OCI-LY7 (cell line): ENCODE measurements at regions of chr12 and their contacts with region 1.

Region 1: DNA sequence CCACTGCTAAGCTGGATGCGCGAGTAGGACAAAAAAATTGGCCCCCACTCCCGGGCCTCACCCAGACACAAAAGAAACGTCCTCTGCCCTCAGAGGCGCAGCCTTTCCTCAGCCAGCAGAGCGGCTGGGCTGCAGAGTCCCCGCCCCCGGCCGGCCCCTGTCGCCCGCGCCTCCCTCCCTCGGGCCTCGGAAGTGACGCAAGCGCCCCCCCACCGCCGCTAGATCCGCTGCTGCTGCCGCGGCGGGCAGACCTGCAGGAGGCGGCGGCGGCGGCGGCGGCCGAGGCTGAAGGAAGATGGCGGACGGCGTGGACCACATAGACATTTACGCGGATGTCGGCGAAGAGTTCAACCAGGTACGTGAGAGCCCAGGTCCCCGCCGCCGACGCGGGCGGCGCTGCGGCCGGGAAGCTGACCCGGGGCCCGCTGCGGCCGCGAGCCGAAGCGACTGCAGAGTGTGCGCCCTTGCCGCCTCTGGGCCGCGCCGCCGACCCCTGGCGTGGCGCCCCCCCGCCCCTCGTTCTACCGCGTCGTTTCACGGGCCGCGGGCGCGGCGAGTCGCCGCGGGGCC is at the start of gene CPSF6:
- DNase-seq: peak; percentile 96
- H3K4me3 ChIP-seq: peak within 1 kb of the TSS; percentile 81
- H3K27ac ChIP-seq: peak within 1 kb of the TSS; percentile 74
- H3K4me1 ChIP-seq: peaks cover 44% of the 10 kb centered on the region
- CTCF ChIP-seq: no peak
- total RNA-seq, gene CPSF6: 90.4 and 207 TPM in 2 replicates

Region 2: GRCh38 chr12:69254046-69254445 is 14.6 kb after region 1 on chr12:
- CTCF ChIA-PET with region 1: no interaction called
- POLR2A ChIA-PET with region 1: interaction called, 14 read pairs
- intact Hi-C with region 1: no loop called
- DNase-seq: peak; percentile 47
- H3K4me3 ChIP-seq: no peak overlapping the region
- H3K27ac ChIP-seq: no peak overlapping the region
- H3K4me1 ChIP-seq: peaks cover 16% of the 10 kb centered on the region
- CTCF ChIP-seq: peak; percentile 88

Region 3: DNA sequence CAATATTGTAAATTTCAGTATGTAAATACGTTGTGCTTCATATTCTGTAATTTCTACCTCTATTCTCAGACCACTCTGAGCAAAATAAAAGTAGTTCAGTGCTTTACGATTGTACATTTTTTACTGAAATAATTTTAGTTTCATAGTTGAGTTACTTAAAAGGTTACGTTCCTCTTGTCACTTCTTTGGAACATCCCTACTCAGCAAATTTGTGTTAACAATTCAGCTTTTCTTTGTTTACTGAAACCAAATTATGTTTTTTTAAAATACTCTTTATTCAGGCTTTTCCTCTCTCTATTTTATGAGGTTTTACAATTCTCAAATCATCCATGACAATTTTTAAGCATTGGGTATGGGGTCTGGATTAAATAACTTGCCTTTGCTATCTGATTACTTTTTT is 25.8 kb after region 1 on chr12:
- CTCF ChIA-PET with region 1: no interaction called
- POLR2A ChIA-PET with region 1: interaction called, 10 read pairs
- intact Hi-C with region 1: no loop called
- DNase-seq: no peak
- H3K4me3 ChIP-seq: no peak overlapping the region
- H3K27ac ChIP-seq: no peak overlapping the region
- H3K4me1 ChIP-seq: no peaks in the 10 kb centered on the region
- CTCF ChIP-seq: no peak

Region 4: GRCh38 chr12:69275471-69275891 is 36.0 kb after region 1 on chr12:
- CTCF ChIA-PET with region 1: no interaction called
- POLR2A ChIA-PET with region 1: no interaction called
- intact Hi-C with region 1: no loop called
- DNase-seq: no peak
- H3K4me3 ChIP-seq: no peak overlapping the region
- H3K27ac ChIP-seq: no peak overlapping the region
- H3K4me1 ChIP-seq: no peaks in the 10 kb centered on the region
- CTCF ChIP-seq: no peak